Cardiac septum (tissue), 1 donor: ENCODE measurements at regions of chr18 and their contacts with region 1.

Region 1: DNA sequence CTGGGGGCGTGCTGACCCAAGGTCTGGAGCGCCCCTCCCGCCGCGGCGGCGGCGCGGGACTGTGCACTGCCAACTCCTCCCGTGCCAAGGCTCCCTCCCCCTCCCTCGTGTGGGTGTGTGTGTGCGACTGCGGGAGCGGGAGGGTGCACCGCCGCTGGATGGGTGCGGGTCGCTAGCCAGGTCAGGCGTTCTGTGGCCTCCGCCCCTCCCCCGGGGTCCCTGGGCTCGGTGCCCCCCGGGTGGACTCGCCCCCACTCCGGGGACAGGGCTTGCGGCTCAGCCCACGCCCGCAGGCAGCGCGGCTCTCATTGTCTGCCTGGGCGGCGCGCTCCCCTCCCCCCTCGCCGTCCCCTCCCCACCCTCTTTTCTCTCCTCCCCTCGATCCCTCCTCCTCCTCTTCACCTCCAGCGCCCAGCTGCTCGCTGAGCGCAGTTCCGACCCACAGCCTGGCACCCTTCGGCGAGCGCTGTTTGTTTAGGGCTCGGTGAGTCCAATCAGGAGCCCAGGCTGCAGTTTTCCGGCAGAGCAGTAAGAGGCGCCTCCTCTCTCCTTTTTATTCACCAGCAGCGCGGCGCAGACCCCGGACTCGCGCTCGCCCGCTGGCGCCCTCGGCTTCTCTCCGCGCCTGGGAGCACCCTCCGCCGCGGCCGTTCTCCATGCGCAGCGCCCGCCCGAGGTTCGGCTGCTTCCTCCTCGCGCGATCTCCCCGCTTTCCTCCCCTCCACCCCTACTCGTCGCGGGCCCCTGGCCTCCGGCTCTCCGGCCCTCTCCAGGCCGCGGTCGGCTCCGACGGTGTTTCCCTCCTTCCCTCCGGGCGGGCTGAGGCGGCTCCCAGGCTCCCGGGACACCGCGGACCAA is at the start of gene GATA6:
- DNase-seq: peak; percentile 94
- total RNA-seq, gene GATA6: 76.2 TPM

Region 2: GRCh38 chr18:21727702-21728101 is 441.5 kb before region 1 on chr18:
- intact Hi-C with region 1: no loop called
- DNase-seq: no peak

Region 3: GRCh38 chr18:21740724-21741510 is 428.3 kb before region 1 on chr18 and contains the start of gene MIB1:
- intact Hi-C with region 1: loop called (anchors 5 kb)
- DNase-seq: peak; percentile 83
- total RNA-seq, gene MIB1: 29.0 TPM

Region 4: GRCh38 chr18:21955757-21956652 is 213.2 kb before region 1 on chr18:
- intact Hi-C with region 1: loop called (anchors 5 kb)
- DNase-seq: peak; percentile 82

Region 5: DNA sequence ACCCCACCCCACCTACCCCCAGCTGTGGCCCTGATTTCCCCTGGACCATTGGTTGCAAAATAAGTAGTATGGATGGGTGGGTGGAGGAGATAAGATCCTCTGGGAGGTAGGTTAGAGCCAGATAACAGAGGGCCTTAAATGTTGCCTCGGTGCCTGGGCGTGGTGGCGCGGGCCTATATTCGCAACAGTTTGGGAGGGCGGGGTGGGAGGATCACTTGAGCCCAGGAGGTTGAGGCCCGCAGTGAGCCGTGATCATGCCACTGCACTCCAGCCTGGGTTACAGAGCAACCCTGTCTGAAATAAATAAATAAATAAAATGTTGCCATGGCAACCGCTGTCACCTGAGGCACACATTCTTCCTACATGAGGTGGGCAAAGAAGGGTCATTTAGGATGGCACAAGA is 103.2 kb before region 1 on chr18:
- intact Hi-C with region 1: no loop called
- DNase-seq: no peak

Region 6: DNA sequence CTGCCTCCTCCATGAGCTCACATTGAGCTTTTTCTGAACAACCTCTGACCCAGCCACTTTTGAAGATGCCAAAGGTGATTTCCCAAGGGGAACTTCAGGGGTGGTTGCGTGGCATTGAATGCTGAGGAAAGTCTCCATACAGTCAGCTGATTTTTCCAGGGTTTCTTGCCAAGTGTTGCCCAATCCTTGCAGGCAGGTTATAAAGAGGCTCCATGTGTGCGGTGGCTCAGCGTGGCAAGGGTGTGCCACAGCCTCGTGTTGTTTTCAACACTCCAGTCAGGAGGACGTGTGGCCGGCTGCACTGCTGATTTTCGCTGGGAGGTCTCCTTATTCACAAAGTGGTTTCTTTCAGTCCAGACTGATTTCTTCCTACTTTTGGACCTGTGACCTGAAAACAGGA is 81.2 kb before region 1 on chr18:
- intact Hi-C with region 1: loop called (anchors 5 kb)
- DNase-seq: no peak

Region 7: DNA sequence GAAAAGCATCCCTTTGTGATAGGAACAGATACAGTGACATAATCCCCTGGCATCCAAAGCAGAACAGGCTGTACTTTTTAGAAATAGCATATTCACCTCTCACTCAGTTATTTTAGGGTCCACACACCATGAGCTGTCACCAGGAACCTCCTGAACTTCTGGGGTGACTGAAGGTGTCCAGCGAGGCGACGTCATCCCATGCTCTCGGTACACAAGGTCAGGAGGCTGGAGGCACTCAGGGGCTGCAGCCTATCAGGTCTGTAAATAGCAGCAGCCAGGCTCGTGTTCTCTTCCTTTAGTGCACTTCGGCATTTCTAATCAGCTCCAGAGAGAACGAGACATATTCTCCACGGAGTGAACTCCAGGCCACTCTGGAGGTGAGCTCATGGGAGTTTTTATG is 98.5 kb after region 1 on chr18:
- intact Hi-C with region 1: loop called (anchors 5 kb)
- DNase-seq: peak; percentile 84

Region 8: DNA sequence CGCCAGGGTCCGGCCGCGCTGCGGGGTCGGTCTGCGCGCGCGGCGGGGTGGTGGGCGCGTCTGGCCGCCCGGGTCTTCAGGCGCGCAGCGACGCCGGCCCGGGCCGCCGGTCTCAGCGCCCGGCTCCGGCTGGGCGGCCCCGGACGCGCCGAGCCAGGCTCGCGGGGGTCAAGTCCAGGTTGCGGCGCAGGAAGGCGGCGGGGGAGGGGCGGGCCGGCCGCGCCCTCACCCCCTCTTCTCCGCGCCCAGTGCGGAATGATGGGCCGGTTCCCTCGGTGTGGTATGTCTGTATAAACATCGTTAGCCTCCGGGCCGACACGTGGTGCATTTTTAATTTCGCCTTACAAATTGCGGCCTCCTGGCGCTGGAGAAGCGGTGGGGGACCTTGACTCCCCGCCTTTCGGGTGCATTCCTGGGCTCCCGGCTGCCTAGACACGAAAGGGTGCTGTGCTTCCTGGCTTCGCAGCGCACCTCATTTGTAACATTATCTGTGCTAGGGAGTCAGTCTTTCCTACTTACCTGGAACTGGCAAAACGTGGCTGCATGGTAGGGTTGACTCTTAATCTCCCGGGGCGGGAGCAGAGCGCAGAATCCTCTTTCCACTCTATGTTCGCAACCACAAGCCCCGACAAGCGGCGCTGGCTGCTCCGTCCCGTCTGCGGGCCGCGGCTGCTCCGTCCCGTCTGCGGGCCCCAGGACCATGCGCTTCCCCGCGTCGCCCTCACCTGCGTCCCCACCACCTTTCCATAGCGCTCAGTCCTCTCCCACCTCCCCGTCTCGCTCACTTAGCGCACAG is 179.5 kb after region 1 on chr18:
- intact Hi-C with region 1: loop called (anchors 2 kb)
- DNase-seq: peak; percentile 88

Region 9: GRCh38 chr18:22370414-22370813 is 201.2 kb after region 1 on chr18:
- intact Hi-C with region 1: no loop called
- DNase-seq: no peak

Region 10: GRCh38 chr18:22703883-22704585 is 534.8 kb after region 1 on chr18:
- intact Hi-C with region 1: loop called (anchors 10 kb)
- DNase-seq: no peak